ENCODE measurements at regions of chr2 and their contacts with region 1.

Region 1: DNA sequence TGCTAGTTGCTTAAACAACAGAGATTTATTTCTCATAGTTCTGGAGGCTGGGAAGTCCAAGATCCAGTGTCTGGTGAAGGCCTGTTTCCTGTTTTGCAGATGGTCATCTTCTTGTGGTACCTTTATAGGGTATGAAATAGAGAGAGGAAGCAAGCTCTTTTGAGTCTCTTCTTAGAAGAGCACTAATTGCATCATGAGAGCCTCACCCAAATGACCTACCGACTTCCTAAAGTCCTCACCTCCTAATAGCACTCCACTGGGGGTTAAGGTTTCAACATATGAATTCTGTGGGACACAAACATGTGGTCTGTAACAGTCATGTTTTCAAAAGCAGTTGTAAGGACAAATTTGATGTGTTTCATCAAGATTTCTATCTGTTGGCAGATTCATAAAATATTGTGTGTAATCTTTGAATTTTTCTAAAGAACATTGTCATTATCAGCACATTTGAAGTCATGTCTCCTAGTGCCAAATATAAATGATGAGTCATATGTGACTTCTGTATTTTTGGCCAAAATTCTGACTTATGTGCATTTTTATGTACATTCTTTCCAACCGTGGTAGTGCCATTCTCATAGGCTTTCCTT is 45.3 kb downstream of the CD28 start:
- DNase-seq: no peak
- H3K4me3 ChIP-seq: no peak overlapping the region
- H3K27ac ChIP-seq: no peak overlapping the region
- H3K4me1 ChIP-seq: no peaks in the 10 kb centered on the region
- H3K27me3 ChIP-seq: no peaks in the 10 kb centered on the region
- CTCF ChIP-seq: no peak
- EP300 ChIP-seq: no peak
- POLR2A ChIP-seq: no peak
- RAD21 ChIP-seq: no peak

Region 2: DNA sequence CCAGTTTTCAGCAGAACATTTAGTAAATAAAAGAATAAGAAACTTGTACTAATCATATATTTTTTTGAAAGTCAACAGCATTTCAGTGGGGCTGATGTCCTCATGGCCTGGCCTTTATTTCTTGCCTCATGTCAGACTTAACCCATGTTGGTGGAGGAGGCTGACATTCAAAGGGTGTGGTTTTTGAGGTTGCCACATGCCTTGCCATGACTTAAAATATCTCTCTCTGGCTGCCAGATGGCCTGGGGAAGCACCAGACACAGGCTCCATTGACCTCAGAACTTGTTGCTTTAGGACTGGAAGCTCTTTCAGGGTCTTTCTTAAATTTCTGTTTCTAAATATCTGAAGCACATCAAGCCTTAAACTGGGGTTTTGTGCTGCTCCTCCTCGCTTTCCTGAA is 77.8 kb before region 1 on chr2:
- CTCF ChIA-PET with region 1: no interaction called
- POLR2A ChIA-PET with region 1: no interaction called
- DNase-seq: no peak
- H3K4me3 ChIP-seq: no peak overlapping the region
- H3K27ac ChIP-seq: no peak overlapping the region
- H3K4me1 ChIP-seq: no peaks in the 10 kb centered on the region
- H3K27me3 ChIP-seq: no peaks in the 10 kb centered on the region
- CTCF ChIP-seq: no peak
- EP300 ChIP-seq: no peak
- POLR2A ChIP-seq: no peak
- RAD21 ChIP-seq: no peak

Region 3: GRCh38 chr2:203740780-203741281 is 10.9 kb before region 1 on chr2:
- CTCF ChIA-PET with region 1: interaction called, 10 read pairs
- POLR2A ChIA-PET with region 1: no interaction called
- DNase-seq: no peak
- H3K4me3 ChIP-seq: no peak overlapping the region
- H3K27ac ChIP-seq: no peak overlapping the region
- H3K4me1 ChIP-seq: no peaks in the 10 kb centered on the region
- H3K27me3 ChIP-seq: no peaks in the 10 kb centered on the region
- CTCF ChIP-seq: no peak
- EP300 ChIP-seq: no peak
- POLR2A ChIP-seq: no peak
- RAD21 ChIP-seq: no peak

Region 4: DNA sequence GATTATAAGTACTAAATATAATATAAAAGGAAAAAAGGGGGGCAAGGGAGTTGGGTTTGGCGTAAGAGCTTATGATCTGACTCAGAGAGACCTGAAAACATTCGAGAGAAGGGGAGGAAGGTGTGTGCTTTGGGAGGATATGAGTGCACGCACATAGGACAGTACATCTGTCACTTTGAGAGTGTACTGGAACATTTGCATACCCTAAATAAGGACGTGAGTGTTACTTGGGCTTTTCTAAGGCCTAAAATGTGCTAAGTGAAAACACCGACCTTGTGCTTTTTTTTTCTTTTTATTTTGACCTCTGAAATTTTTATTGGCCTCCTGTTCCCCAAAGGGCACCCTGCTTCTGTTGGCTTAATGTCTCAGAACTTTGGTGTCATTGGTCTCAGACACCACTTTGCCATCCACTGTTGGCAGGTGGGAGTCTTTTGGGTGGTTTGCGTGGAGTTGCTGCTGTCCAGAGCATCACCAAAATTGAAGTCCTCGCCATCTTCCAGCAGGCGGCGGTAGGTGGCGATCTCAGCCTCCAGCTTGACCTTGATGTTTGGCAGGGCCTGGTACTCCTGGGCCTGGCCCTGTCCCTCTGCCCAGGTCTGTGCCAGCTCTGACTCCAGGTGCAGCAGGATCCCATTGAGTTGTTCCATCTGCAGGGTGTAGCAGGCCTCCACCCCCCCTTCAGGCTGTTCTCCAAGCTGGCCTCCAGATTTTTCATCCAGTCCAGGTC is 12.3 kb after region 1 on chr2:
- CTCF ChIA-PET with region 1: interaction called, 13 read pairs
- POLR2A ChIA-PET with region 1: no interaction called
- DNase-seq: peak in 1 of 2 experiments; percentile 53
- H3K4me3 ChIP-seq: no peak overlapping the region
- H3K27ac ChIP-seq: no peak overlapping the region
- H3K4me1 ChIP-seq: no peaks in the 10 kb centered on the region
- H3K27me3 ChIP-seq: no peaks in the 10 kb centered on the region
- CTCF ChIP-seq: peak; percentile 26 to 43 (median 33); a peak in 3 of 4 replicates
- EP300 ChIP-seq: no peak
- POLR2A ChIP-seq: no peak
- RAD21 ChIP-seq: peak; percentile 8 to 42; a peak in 2 of 4 replicates

Measured in H1 (cell line).